ENCODE measurements at regions of chr15 and their contacts with region 1.

Region 1: GRCh38 chr15:54577476-54578250 is 599.4 kb downstream of the UNC13C start:
- DNase-seq: no peak
- ATAC-seq: no peak
- H3K4me3 ChIP-seq: no peak overlapping the region
- H3K27ac ChIP-seq: no peak overlapping the region
- H3K4me1 ChIP-seq: 0 out of 2 replicates have a peak, but pooled peaks cover 3% of the 10 kb centered on the region
- H3K27me3 ChIP-seq: no peaks in the 10 kb centered on the region
- CTCF ChIP-seq: no peak
- EP300 ChIP-seq: no peak
- POLR2A ChIP-seq: no peak
- RAD21 ChIP-seq: no peak

Region 2: GRCh38 chr15:54481819-54482218 is 95.8 kb before region 1 on chr15:
- CTCF ChIA-PET with region 1: no interaction called
- POLR2A ChIA-PET with region 1: no interaction called
- RAD21 ChIA-PET with region 1: interaction called, 14 read pairs
- SMC1A ChIA-PET with region 1: interaction called, 17 read pairs
- in situ Hi-C with region 1: no loop called
- intact Hi-C with region 1: no loop called
- DNase-seq: no peak
- ATAC-seq: peak; percentile 80
- H3K4me3 ChIP-seq: no peak overlapping the region
- H3K27ac ChIP-seq: no peak overlapping the region
- H3K4me1 ChIP-seq: no peaks in the 10 kb centered on the region
- H3K27me3 ChIP-seq: no peaks in the 10 kb centered on the region
- CTCF ChIP-seq: peak in 2 of 3 experiments; percentile 13 to 33; a peak in 2 of 6 replicates
- EP300 ChIP-seq: no peak
- POLR2A ChIP-seq: no peak
- RAD21 ChIP-seq: peak; percentile 35

Region 3: GRCh38 chr15:54567408-54568035 is 10.1 kb before region 1 on chr15:
- CTCF ChIA-PET with region 1: interaction called, 3 read pairs
- POLR2A ChIA-PET with region 1: interaction called, 6 read pairs
- RAD21 ChIA-PET with region 1: interaction called, 36 read pairs
- SMC1A ChIA-PET with region 1: interaction called, 16 read pairs
- in situ Hi-C with region 1: no loop called
- intact Hi-C with region 1: no loop called
- DNase-seq: no peak
- ATAC-seq: no peak
- H3K4me3 ChIP-seq: no peak overlapping the region
- H3K27ac ChIP-seq: no peak overlapping the region
- H3K4me1 ChIP-seq: no peaks in the 10 kb centered on the region
- H3K27me3 ChIP-seq: no peaks in the 10 kb centered on the region
- CTCF ChIP-seq: no peak
- EP300 ChIP-seq: no peak
- POLR2A ChIP-seq: no peak
- RAD21 ChIP-seq: no peak